Activated CD4-positive, alpha-beta memory T cell treated with anti-CD3 and anti-CD28 coated beads, Interleukin-2, amount 10 ng/mL, durations not matched to agents 7 days and 5 days (primary cell): ENCODE measurements at regions of chr4 and their contacts with region 1.

Region 1: GRCh38 chr4:83639849-83640493 is 104.1 kb downstream of the GPAT3 start:
- DNase-seq: peak; percentile 53
- H3K4me3 Mint-ChIP-seq: no peak overlapping the region
- H3K27ac Mint-ChIP-seq: no peak overlapping the region
- H3K4me1 Mint-ChIP-seq: peaks cover 2% of the 10 kb centered on the region
- H3K27me3 Mint-ChIP-seq: peaks cover 10% of the 10 kb centered on the region

Region 2: GRCh38 chr4:83490876-83491450 is 149.0 kb before region 1 on chr4:
- CTCF ChIA-PET with region 1: interaction called, 30 read pairs
- POLR2A ChIA-PET with region 1: no interaction called
- DNase-seq: no peak
- H3K4me3 Mint-ChIP-seq: no peak overlapping the region
- H3K27ac Mint-ChIP-seq: no peak overlapping the region
- H3K4me1 Mint-ChIP-seq: peaks cover 4% of the 10 kb centered on the region
- H3K27me3 Mint-ChIP-seq: peaks cover 2% of the 10 kb centered on the region

Region 3: GRCh38 chr4:83503974-83504373 is 136.0 kb before region 1 on chr4:
- CTCF ChIA-PET with region 1: interaction called, 72 read pairs
- POLR2A ChIA-PET with region 1: no interaction called
- DNase-seq: peak; percentile 35
- H3K4me3 Mint-ChIP-seq: no peak overlapping the region
- H3K27ac Mint-ChIP-seq: no peak overlapping the region
- H3K4me1 Mint-ChIP-seq: peaks cover 14% of the 10 kb centered on the region
- H3K27me3 Mint-ChIP-seq: no peaks in the 10 kb centered on the region

Region 4: DNA sequence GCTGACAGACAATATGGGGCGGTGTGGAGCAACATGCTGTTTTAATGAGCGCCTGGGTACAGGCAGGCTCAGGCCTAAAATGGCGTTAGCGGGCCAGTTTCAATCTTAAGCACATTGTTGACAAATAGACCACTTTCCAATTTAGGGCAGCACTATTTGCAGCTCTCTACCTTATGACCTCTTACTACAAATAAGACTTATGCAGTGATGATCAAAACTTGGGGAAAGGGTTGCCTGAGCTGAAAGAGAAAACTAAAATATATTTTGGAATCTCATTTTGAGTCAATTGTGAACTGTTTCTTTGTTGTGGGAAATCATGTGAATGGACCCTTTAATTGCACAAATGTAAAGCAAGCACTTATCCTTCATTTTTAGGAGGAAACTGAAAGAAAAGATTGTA is 129.5 kb before region 1 on chr4:
- CTCF ChIA-PET with region 1: interaction called, 72 read pairs
- POLR2A ChIA-PET with region 1: no interaction called
- DNase-seq: no peak
- H3K4me3 Mint-ChIP-seq: no peak overlapping the region
- H3K27ac Mint-ChIP-seq: no peak overlapping the region
- H3K4me1 Mint-ChIP-seq: peaks cover 11% of the 10 kb centered on the region
- H3K27me3 Mint-ChIP-seq: no peaks in the 10 kb centered on the region